Activated CD4-positive, alpha-beta memory T cell treated with anti-CD3 and anti-CD28 coated beads for 36 hours (primary cell): ENCODE measurements at regions of chr1 and their contacts with region 1.

Region 1: DNA sequence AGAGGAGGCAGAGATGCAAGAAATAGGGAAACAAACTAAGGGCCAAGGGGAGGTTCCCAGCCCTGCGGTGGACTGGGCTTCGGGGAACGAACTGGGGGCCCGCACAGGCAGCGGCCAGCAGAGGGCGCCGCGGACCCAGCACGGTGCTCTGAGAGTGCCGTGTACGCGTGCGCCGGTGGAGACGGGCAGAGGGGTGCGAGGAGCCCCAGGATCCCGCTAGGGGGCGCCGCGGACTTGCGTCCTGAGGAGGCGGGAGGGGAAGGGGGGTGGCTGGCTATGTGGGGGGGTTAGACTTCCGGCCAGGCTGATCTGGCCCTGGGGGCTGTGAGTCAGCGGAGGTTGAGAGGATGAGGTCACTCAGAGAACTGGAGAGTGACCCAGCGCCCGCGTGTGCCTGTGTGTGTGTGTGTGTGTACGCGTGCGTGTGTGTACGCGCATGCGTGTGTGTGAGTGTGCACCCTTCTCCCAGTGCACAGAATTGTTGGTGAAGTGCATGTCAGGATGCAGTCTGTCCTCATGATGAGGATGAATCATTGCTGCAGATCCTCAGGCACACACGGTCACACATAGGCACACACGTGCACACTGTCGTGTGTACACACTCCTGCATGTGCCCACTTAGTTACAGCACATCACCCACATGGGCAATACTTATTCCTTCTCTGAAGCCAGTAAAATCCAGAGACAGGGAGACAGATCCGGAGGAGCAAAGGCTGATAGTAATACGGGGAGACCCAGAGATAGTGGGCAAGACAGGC is 17.0 kb downstream of the NES start:
- DNase-seq: peak; percentile 96
- H3K4me3 Mint-ChIP-seq: peak overlapping the region; percentile 81
- H3K27ac Mint-ChIP-seq: peak overlapping the region; percentile 82
- H3K4me1 Mint-ChIP-seq: peaks cover 37% of the 10 kb centered on the region
- H3K27me3 Mint-ChIP-seq: peaks cover 27% of the 10 kb centered on the region

Region 2: GRCh38 chr1:156574039-156574633 is 86.0 kb before region 1 on chr1:
- CTCF ChIA-PET with region 1: no interaction called
- POLR2A ChIA-PET with region 1: no interaction called
- intact Hi-C with region 1: no loop called
- DNase-seq: no peak
- H3K4me3 Mint-ChIP-seq: no peak overlapping the region
- H3K27ac Mint-ChIP-seq: no peak overlapping the region
- H3K4me1 Mint-ChIP-seq: peaks cover 18% of the 10 kb centered on the region
- H3K27me3 Mint-ChIP-seq: peaks cover 25% of the 10 kb centered on the region

Region 3: DNA sequence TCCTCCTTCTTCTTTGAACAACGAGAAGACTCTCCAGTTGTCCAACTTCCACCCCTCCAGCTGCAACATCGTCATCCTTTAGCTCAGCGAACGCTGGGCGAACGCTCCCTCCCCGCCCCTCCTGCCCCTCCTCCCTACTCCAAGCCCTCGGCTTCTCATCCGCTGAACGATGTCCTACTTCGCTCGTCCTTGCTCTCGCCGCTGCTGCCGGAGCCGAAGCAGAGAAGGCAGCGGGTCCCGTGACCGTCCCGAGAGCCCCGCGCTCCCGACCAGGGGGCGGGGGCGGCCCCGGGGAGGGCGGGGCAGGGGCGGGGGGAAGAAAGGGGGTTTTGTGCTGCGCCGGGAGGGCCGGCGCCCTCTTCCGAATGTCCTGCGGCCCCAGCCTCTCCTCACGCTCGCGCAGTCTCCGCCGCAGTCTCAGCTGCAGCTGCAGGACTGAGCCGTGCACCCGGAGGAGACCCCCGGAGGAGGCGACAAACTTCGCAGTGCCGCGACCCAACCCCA is 18.4 kb before region 1 on chr1 and contains the start of gene BCAN:
- CTCF ChIA-PET with region 1: interaction called, 30 read pairs
- POLR2A ChIA-PET with region 1: no interaction called
- intact Hi-C with region 1: no loop called
- DNase-seq: peak; percentile 34
- H3K4me3 Mint-ChIP-seq: no peak within 1 kb of the TSS
- H3K27ac Mint-ChIP-seq: no peak within 1 kb of the TSS
- H3K4me1 Mint-ChIP-seq: peaks cover 24% of the 10 kb centered on the region
- H3K27me3 Mint-ChIP-seq: peaks cover 75% of the 10 kb centered on the region
- total RNA-seq, gene BCAN: not detected

Region 4: GRCh38 chr1:156677616-156678596 is 17.7 kb after region 1 on chr1:
- CTCF ChIA-PET with region 1: interaction called, 59 read pairs
- POLR2A ChIA-PET with region 1: interaction called, 3 read pairs
- intact Hi-C with region 1: loop called (anchors 1 kb)
- DNase-seq: peak; percentile 44
- H3K4me3 Mint-ChIP-seq: no peak overlapping the region
- H3K27ac Mint-ChIP-seq: no peak overlapping the region
- H3K4me1 Mint-ChIP-seq: peaks cover 12% of the 10 kb centered on the region
- H3K27me3 Mint-ChIP-seq: peaks cover 56% of the 10 kb centered on the region

Region 5: GRCh38 chr1:156705918-156706656 is 45.9 kb after region 1 on chr1:
- CTCF ChIA-PET with region 1: interaction called, 47 read pairs
- POLR2A ChIA-PET with region 1: interaction called, 3 read pairs
- intact Hi-C with region 1: loop called (anchors 2 kb)
- DNase-seq: peak; percentile 82
- H3K4me3 Mint-ChIP-seq: peak overlapping the region; percentile 75
- H3K27ac Mint-ChIP-seq: no peak overlapping the region
- H3K4me1 Mint-ChIP-seq: peaks cover 28% of the 10 kb centered on the region
- H3K27me3 Mint-ChIP-seq: peaks cover 24% of the 10 kb centered on the region